ENCODE measurements at regions of chr20 and their contacts with region 1.

Region 1: GRCh38 chr20:3795511-3796468 is at the start of gene CDC25B:
- DNase-seq: peak; percentile 91
- ATAC-seq: peak; percentile 89
- H3K4me3 ChIP-seq: peak within 1 kb of the TSS; percentile 76 to 88 (median 85)
- H3K27ac ChIP-seq: peak within 1 kb of the TSS; percentile 66
- H3K4me1 ChIP-seq: peaks cover 45% of the 10 kb centered on the region
- H3K27me3 ChIP-seq: no peaks in the 10 kb centered on the region; a peak in 1 of 5 replicates
- CTCF ChIP-seq: peak; percentile 57
- EP300 ChIP-seq: peak in 1 of 2 experiments; percentile 31; a peak in 1 of 4 replicates
- POLR2A ChIP-seq: peak; percentile 75 to 77
- RAD21 ChIP-seq: peak; percentile 63
- total RNA-seq, gene CDC25B: 14.5 and 19.3 TPM in 2 replicates

Region 2: GRCh38 chr20:3710703-3711483 is 84.9 kb before region 1 on chr20:
- CTCF ChIA-PET with region 1: no interaction called
- POLR2A ChIA-PET with region 1: no interaction called
- in situ Hi-C with region 1: no loop called
- intact Hi-C with region 1: no loop called
- DNase-seq: peak; percentile 46
- ATAC-seq: peak; percentile 76
- H3K4me3 ChIP-seq: no peak overlapping the region
- H3K27ac ChIP-seq: no peak overlapping the region
- H3K4me1 ChIP-seq: no peaks in the 10 kb centered on the region
- H3K27me3 ChIP-seq: peaks cover 9 to 41% of the 10 kb centered on the region in 2 experiments
- CTCF ChIP-seq: peak; percentile 98
- EP300 ChIP-seq: no peak
- POLR2A ChIP-seq: no peak
- RAD21 ChIP-seq: peak; percentile 92

Region 3: DNA sequence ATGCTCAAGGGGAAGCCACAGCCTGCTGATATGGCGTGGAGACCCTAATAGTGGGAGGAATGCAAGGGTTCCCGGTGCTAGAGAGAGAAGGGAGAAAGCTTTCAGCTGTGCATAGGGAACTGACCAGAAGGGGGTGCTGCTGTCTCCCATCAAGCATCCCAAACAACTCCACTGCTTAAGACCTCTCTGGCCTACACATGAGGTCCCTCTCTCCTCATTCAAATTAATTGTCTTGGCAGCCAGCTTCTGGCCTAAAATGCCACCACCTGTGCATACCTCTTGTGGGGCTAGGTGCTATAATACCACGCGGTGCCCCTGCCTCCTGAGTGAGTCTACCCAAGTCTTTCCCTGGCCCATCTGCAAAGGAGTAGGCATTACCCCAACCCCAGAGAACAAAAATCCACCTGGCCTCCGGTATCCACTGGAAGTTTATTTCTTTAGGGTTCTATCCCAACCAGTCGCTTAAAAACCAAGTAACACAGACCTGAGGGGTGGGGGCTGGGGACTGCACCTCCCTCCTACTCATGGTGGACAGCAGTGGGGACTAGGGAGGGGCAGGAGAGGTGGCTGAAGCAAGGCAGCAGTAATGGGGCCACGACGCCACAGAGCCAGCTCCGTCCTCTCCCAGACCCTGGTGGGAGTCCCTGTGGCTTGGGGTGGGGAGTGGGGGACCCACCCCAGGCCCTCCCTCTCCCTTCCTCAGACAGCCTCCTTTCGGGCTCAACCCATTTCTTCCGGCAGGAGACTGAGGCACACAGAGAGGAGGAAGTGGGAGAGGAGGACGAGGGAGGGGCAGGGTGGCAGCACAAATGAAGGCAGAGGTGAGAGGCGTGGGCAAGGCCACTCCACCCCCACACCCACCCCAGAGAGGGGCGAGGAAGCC is 42.5 kb before region 1 on chr20:
- CTCF ChIA-PET with region 1: no interaction called
- POLR2A ChIA-PET with region 1: no interaction called
- in situ Hi-C with region 1: no loop called
- intact Hi-C with region 1: no loop called
- DNase-seq: peak; percentile 71
- ATAC-seq: peak; percentile 54
- H3K4me3 ChIP-seq: no peak overlapping the region
- H3K27ac ChIP-seq: no peak overlapping the region
- H3K4me1 ChIP-seq: peaks cover 19% of the 10 kb centered on the region
- H3K27me3 ChIP-seq: peaks cover 2 to 9% of the 10 kb centered on the region in 2 experiments; a peak in 4 of 5 replicates
- CTCF ChIP-seq: peak; percentile 91
- EP300 ChIP-seq: no peak
- POLR2A ChIP-seq: no peak
- RAD21 ChIP-seq: peak; percentile 84

Region 4: GRCh38 chr20:3811467-3812258 is 15.9 kb after region 1 on chr20:
- CTCF ChIA-PET with region 1: no interaction called
- POLR2A ChIA-PET with region 1: interaction called, 4 read pairs
- in situ Hi-C with region 1: no loop called
- intact Hi-C with region 1: loop called (anchors 1 kb)
- DNase-seq: peak; percentile 90
- ATAC-seq: peak; percentile 81
- H3K4me3 ChIP-seq: peak overlapping the region; percentile 18 to 59 (median 44); a peak in 5 of 6 replicates
- H3K27ac ChIP-seq: no peak overlapping the region
- H3K4me1 ChIP-seq: peaks cover 61% of the 10 kb centered on the region
- H3K27me3 ChIP-seq: peaks cover 2 to 14% of the 10 kb centered on the region in 2 experiments; a peak in 3 of 5 replicates
- CTCF ChIP-seq: peak; percentile 36
- EP300 ChIP-seq: peak; percentile 60 to 70; a peak in 3 of 4 replicates
- POLR2A ChIP-seq: peak in 1 of 2 experiments; percentile 75; a peak in 2 of 4 replicates
- RAD21 ChIP-seq: peak; percentile 29; the same call in 1 of the 2 replicates

Measured in HepG2 (cell line).